HepG2 (cell line): ENCODE measurements at regions of chr12 and their contacts with region 1.

Region 1: DNA sequence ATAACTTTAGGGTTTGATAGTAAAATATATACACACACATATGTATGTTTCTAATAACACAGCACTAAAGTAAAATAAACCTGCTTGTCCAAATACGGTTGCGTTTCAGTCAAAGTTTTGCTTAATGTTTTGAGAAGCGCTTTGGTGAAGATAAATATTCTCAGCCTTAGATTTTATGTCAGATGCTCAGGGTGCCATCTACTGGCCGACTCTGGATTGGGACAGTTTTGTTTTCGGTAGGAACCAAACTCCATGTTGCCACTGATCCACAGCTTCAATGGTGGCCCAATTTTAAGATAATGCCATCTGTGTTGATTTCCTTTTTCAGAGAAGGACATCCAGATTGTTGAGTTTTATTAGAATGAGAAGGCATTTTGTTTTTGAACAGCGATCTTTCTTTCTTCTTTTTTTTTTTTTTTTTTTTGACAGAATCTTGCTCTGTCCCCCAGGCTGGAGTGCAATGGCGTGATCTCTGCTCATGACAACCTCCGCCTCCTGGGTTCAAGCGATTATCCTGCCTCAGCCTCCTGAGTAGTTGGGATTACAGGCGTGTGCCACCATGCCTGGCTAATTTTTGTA is 43.1 kb downstream of the LLPH start:
- DNase-seq: peak; percentile 57
- ATAC-seq: peak; percentile 72
- H3K4me3 ChIP-seq: no peak overlapping the region
- H3K27ac ChIP-seq: no peak overlapping the region
- H3K4me1 ChIP-seq: peaks cover 27% of the 10 kb centered on the region
- H3K27me3 ChIP-seq: no peaks in the 10 kb centered on the region
- CTCF ChIP-seq: peak; percentile 83
- EP300 ChIP-seq: no peak
- POLR2A ChIP-seq: no peak
- RAD21 ChIP-seq: peak; percentile 77

Region 2: GRCh38 chr12:65673732-65674131 is 413.7 kb before region 1 on chr12:
- CTCF ChIA-PET with region 1: no interaction called
- POLR2A ChIA-PET with region 1: no interaction called
- in situ Hi-C with region 1: no loop called
- intact Hi-C with region 1: no loop called
- DNase-seq: no peak
- ATAC-seq: no peak
- H3K4me3 ChIP-seq: no peak overlapping the region
- H3K27ac ChIP-seq: no peak overlapping the region
- H3K4me1 ChIP-seq: no peaks in the 10 kb centered on the region
- H3K27me3 ChIP-seq: no peaks in the 10 kb centered on the region; a peak in 1 of 5 replicates
- CTCF ChIP-seq: no peak
- EP300 ChIP-seq: no peak
- POLR2A ChIP-seq: no peak
- RAD21 ChIP-seq: no peak

Region 3: DNA sequence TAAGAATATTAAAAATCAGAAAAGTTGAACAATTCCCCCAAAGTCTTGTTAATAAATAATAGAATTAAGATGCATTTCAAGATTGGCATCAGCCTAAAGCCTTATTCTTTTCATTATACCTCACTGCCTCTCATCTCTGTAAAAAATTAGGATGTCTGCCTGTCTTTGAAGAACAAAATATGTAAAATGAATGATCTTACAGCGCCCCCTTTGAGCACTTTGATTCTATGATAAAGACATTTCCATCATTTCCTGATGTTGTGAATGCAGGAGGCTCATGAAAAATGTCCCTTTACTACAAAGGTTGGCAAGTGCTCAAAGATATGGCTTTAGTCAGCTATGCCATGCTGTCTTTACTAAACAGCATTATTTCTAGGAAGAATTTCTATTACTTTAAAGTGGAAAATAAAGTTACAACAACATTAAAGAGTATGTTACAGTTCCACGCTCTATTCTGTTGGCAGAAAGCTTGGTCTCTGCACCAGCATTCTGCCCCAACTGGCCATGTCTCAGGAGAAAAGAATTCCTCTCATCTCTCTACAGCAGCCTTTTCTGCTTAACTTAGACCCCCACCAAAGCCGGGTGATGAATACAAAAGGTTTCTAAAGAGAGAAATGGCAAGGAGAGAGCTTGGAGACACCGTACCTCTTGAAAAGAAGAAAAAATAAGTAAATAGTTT is 52.0 kb before region 1 on chr12:
- CTCF ChIA-PET with region 1: interaction called, 3 read pairs
- POLR2A ChIA-PET with region 1: no interaction called
- in situ Hi-C with region 1: loop called (anchors 10 kb)
- intact Hi-C with region 1: loop called (anchors 10 kb)
- DNase-seq: peak; percentile 42
- ATAC-seq: no peak
- H3K4me3 ChIP-seq: no peak overlapping the region
- H3K27ac ChIP-seq: no peak overlapping the region
- H3K4me1 ChIP-seq: peaks cover 15% of the 10 kb centered on the region
- H3K27me3 ChIP-seq: no peaks in the 10 kb centered on the region; a peak in 1 of 5 replicates
- CTCF ChIP-seq: peak; percentile 28; the same call in 1 of the 2 replicates
- EP300 ChIP-seq: no peak
- POLR2A ChIP-seq: no peak
- RAD21 ChIP-seq: no peak